ENCODE measurements at regions of chr11 and their contacts with region 1.

Region 1: DNA sequence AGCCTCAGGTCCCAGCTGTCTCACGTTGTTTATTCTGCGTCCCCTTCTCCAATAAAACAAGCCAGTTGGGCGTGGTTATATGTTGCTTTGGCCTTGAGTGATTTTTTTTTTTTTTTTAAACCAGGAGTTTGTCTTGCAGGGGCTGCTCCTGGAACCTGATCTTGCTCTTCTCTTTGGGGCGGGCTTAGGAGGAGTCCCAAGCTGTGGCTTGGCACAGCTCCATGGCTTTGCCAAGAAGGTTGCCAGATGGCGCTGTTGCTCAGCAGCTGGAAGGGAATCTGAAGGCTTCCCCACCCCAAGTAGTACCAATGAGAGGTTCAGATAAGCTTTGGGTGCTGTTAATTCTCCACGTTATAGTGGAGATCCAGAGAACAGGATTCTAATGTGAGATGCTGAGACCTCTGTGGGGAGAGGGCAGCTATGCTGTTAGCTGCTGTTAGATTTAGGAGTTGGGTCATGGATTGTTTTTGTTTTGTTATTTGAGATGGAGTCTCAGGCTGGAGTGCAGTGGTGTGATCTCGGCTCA is 2.0 kb upstream of the FERMT3 start:
- DNase-seq: peak; percentile 79 to 92 (median 87)
- ATAC-seq: peak; percentile 79 to 87 (median 82)
- H3K4me3 ChIP-seq: no peak overlapping the region
- H3K27ac ChIP-seq: peak overlapping the region in 1 of 4 donors; percentile 4
- H3K4me1 ChIP-seq: peaks cover 0 to 3% (median 0%) of the 10 kb centered on the region in 3 donors
- H3K27me3 ChIP-seq: no peaks in the 10 kb centered on the region
- CTCF ChIP-seq: peak; percentile 27 to 48 (median 42)

Region 2: DNA sequence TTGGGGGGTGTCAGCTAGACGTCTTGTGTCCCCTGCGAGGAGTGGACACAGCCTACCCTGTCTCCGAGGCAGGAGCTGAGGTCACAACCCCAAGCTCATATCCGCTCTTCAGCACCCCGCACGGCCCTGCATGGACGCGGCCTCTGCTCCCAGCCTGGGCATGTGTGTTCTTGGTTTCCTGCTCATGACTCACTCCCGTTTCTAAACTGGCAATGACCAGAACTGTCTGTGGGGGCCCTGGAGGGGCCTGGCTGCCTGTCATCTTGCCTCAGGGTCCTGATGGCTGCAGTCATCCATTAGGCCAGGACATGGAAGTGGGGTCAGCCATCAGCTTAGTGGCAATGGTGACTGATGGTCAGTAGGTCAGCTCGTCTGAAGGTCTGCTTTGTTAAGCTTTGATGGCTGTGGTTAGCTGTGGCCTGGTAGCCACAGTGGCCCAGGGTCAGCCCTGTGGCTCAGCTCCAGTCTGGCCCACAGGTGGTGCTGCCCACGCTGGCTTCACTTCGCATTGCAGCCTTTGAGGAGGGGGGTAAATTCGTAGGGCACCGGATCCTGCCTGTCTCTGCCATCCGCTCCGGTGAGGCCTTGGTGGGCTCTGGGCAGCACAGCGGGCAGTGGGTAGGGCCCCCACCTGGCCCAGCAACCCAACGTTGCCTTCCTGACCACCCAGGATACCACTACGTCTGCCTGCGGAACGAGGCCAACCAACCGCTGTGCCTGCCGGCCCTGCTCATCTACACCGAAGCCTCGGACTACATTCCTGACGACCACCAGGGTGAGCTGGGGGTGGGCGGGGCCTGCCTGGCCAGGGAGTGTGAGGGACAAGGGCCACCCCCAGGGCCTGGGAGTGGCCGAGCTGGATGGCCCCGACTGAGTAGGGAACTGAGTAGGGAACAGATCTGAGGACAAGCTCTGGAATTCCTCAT is 58.8 kb after region 1 on chr11:
- intact Hi-C with region 1: loop called in 1 of 3 experiments (anchors 5 kb)
- DNase-seq: peak in 3 of 6 donors; percentile 44 to 74 (median 45)
- ATAC-seq: no peak
- H3K4me3 ChIP-seq: no peak overlapping the region
- H3K27ac ChIP-seq: no peak overlapping the region
- H3K4me1 ChIP-seq: peaks cover 0 to 5% (median 0%) of the 10 kb centered on the region in 3 donors
- H3K27me3 ChIP-seq: no peaks in the 10 kb centered on the region
- CTCF ChIP-seq: no peak

Region 3: GRCh38 chr11:64291752-64292459 is 87.4 kb after region 1 on chr11:
- intact Hi-C with region 1: loop called in 2 of 3 experiments (anchors 5 to 10 kb)
- DNase-seq: peak in 1 of 6 donors; percentile 71
- ATAC-seq: peak in 1 of 4 donors; percentile 38
- H3K4me3 ChIP-seq: peak overlapping the region in 2 of 4 donors; percentile 18 to 44
- H3K27ac ChIP-seq: no peak overlapping the region
- H3K4me1 ChIP-seq: peaks cover 0 to 11% (median 8%) of the 10 kb centered on the region in 3 donors
- H3K27me3 ChIP-seq: peaks cover 0 to 7% (median 2%) of the 10 kb centered on the region in 4 donors
- CTCF ChIP-seq: no peak

Region 4: GRCh38 chr11:64298966-64299846 is 94.7 kb after region 1 on chr11:
- intact Hi-C with region 1: loop called in 2 of 3 experiments (anchors 5 to 10 kb)
- DNase-seq: peak; percentile 59 to 89 (median 72)
- ATAC-seq: peak; percentile 46 to 65 (median 56)
- H3K4me3 ChIP-seq: peak overlapping the region; percentile 14 to 46 (median 30)
- H3K27ac ChIP-seq: no peak overlapping the region
- H3K4me1 ChIP-seq: peaks cover 10 to 24% (median 11%) of the 10 kb centered on the region in 3 donors
- H3K27me3 ChIP-seq: peaks cover 0 to 21% (median 9%) of the 10 kb centered on the region in 4 donors
- CTCF ChIP-seq: no peak

Measured in pancreas (tissue), 10 donors.